HCT116 (cell line): ENCODE measurements at regions of chr4 and their contacts with region 1.

Region 1: DNA sequence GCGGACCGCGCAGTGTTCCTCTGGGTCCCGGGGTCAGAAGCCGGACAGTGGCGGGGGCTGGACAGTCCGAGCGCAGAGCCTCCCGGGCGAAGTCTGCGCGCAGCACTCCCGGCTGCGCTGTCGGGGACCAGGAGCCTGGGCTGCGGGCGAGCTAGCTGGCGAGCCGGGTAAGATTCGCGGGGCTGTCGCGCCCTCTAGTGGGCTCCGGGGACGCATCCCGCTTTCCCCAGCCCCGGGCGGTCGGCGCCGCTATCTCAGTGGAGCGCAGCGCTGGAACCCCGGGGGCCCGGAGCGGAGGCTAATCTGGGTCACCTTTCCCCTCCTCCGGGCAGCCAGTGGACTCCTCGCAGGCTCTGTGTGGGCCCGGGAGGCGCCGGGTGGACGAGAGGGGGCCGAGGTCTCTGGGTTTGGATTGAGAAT is 4.2 kb downstream of the PDGFRA start:
- DNase-seq: peak; percentile 40
- ATAC-seq: peak; percentile 90
- H3K4me3 ChIP-seq: peak overlapping the region; percentile 28 to 48
- H3K27ac ChIP-seq: no peak overlapping the region
- H3K4me1 ChIP-seq: peaks cover 0 to 18% of the 10 kb centered on the region in 2 experiments; a peak in 3 of 4 replicates
- H3K27me3 ChIP-seq: no peaks in the 10 kb centered on the region
- CTCF ChIP-seq: peak; percentile 66 to 84 (median 72)
- POLR2A ChIP-seq: no peak
- RAD21 ChIP-seq: peak; percentile 88

Region 2: GRCh38 chr4:52369649-52370048 is 1863.6 kb before region 1 on chr4:
- CTCF ChIA-PET with region 1: no interaction called
- POLR2A ChIA-PET with region 1: no interaction called
- RAD21 ChIA-PET with region 1: no interaction called
- intact Hi-C with region 1: loop called (anchors 5 kb)
- DNase-seq: no peak
- ATAC-seq: no peak
- H3K4me3 ChIP-seq: no peak overlapping the region
- H3K27ac ChIP-seq: no peak overlapping the region
- H3K4me1 ChIP-seq: no peaks in the 10 kb centered on the region
- H3K27me3 ChIP-seq: peaks cover 4% of the 10 kb centered on the region
- CTCF ChIP-seq: no peak
- POLR2A ChIP-seq: no peak
- RAD21 ChIP-seq: no peak

Region 3: GRCh38 chr4:53015681-53016080 is 1217.6 kb before region 1 on chr4:
- CTCF ChIA-PET with region 1: interaction called, 49 read pairs
- POLR2A ChIA-PET with region 1: no interaction called
- RAD21 ChIA-PET with region 1: interaction called in 1 of 2 experiments, 3 read pairs
- intact Hi-C with region 1: loop called (anchors 1 kb)
- DNase-seq: peak; percentile 26
- ATAC-seq: peak; percentile 52; the same call in 1 of the 2 replicates
- H3K4me3 ChIP-seq: no peak overlapping the region
- H3K27ac ChIP-seq: no peak overlapping the region
- H3K4me1 ChIP-seq: peaks cover 3 to 8% of the 10 kb centered on the region in 2 experiments; a peak in 2 of 4 replicates
- H3K27me3 ChIP-seq: no peaks in the 10 kb centered on the region
- CTCF ChIP-seq: peak; percentile 57 to 73 (median 60); a peak in 5 of 6 replicates
- POLR2A ChIP-seq: no peak
- RAD21 ChIP-seq: peak; percentile 73

Region 4: DNA sequence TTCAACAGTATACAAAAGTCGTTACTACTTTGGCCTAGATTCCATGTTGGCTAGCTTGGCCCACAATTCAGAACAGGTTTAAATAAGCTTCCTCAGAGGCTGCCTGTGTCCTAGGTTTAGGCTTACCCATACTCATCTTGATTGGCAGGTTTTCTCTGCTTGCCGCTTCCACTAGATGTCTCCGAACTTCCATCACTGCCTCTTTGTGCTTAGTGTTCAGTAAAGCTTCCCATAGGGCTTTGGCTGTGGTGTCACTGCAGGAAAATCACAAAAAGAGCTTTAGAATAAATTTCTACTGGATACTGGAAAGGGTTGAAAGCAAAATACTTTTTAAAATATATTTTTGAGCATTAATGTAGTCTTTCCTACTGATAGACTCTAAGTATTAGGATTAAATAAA is 919.8 kb before region 1 on chr4:
- CTCF ChIA-PET with region 1: interaction called, 7 read pairs
- POLR2A ChIA-PET with region 1: no interaction called
- RAD21 ChIA-PET with region 1: no interaction called
- intact Hi-C with region 1: loop called (anchors 5 kb)
- DNase-seq: no peak
- ATAC-seq: peak; percentile 89
- H3K4me3 ChIP-seq: no peak overlapping the region
- H3K27ac ChIP-seq: no peak overlapping the region
- H3K4me1 ChIP-seq: no peaks in the 10 kb centered on the region
- H3K27me3 ChIP-seq: no peaks in the 10 kb centered on the region
- CTCF ChIP-seq: peak; percentile 19 to 34 (median 26); a peak in 3 of 6 replicates
- POLR2A ChIP-seq: no peak
- RAD21 ChIP-seq: peak; percentile 63

Region 5: GRCh38 chr4:53614591-53614990 is 618.7 kb before region 1 on chr4:
- CTCF ChIA-PET with region 1: interaction called, 3 read pairs
- POLR2A ChIA-PET with region 1: no interaction called
- RAD21 ChIA-PET with region 1: no interaction called
- intact Hi-C with region 1: loop called (anchors 10 kb)
- DNase-seq: no peak
- ATAC-seq: peak; percentile 64
- H3K4me3 ChIP-seq: no peak overlapping the region
- H3K27ac ChIP-seq: no peak overlapping the region
- H3K4me1 ChIP-seq: no peaks in the 10 kb centered on the region
- H3K27me3 ChIP-seq: 0 out of 2 replicates have a peak, but pooled peaks cover 7% of the 10 kb centered on the region
- CTCF ChIP-seq: peak in 2 of 3 experiments; percentile 32; a peak in 4 of 6 replicates
- POLR2A ChIP-seq: no peak
- RAD21 ChIP-seq: peak; percentile 15; the same call in 1 of the 2 replicates

Region 6: GRCh38 chr4:53908661-53909078 is 324.6 kb before region 1 on chr4:
- CTCF ChIA-PET with region 1: interaction called, 34 read pairs
- POLR2A ChIA-PET with region 1: no interaction called
- RAD21 ChIA-PET with region 1: interaction called, 3 to 4 read pairs
- intact Hi-C with region 1: loop called (anchors 1 kb)
- DNase-seq: peak; percentile 62
- ATAC-seq: peak; percentile 93
- H3K4me3 ChIP-seq: peak overlapping the region; percentile 6 to 13; a peak in 2 of 4 replicates
- H3K27ac ChIP-seq: no peak overlapping the region
- H3K4me1 ChIP-seq: peaks cover 2 to 7% of the 10 kb centered on the region in 2 experiments; a peak in 3 of 4 replicates
- H3K27me3 ChIP-seq: peaks cover 11% of the 10 kb centered on the region; the same call in 1 of the 2 replicates
- CTCF ChIP-seq: peak; percentile 73 to 84 (median 83)
- POLR2A ChIP-seq: no peak
- RAD21 ChIP-seq: peak; percentile 87

Region 7: GRCh38 chr4:54217642-54218495 is 15.4 kb before region 1 on chr4:
- CTCF ChIA-PET with region 1: interaction called, 13 read pairs
- POLR2A ChIA-PET with region 1: no interaction called
- RAD21 ChIA-PET with region 1: no interaction called
- intact Hi-C with region 1: no loop called
- DNase-seq: peak; percentile 71
- ATAC-seq: peak; percentile 97
- H3K4me3 ChIP-seq: peak overlapping the region; percentile 50 to 54
- H3K27ac ChIP-seq: no peak overlapping the region; the same call in 1 of the 2 replicates
- H3K4me1 ChIP-seq: peaks cover 0 to 12% of the 10 kb centered on the region in 2 experiments; a peak in 2 of 4 replicates
- H3K27me3 ChIP-seq: no peaks in the 10 kb centered on the region
- CTCF ChIP-seq: peak; percentile 85 to 91 (median 88)
- POLR2A ChIP-seq: no peak
- RAD21 ChIP-seq: peak; percentile 96